ENCODE measurements at regions of chr2 and their contacts with region 1.

Region 1: DNA sequence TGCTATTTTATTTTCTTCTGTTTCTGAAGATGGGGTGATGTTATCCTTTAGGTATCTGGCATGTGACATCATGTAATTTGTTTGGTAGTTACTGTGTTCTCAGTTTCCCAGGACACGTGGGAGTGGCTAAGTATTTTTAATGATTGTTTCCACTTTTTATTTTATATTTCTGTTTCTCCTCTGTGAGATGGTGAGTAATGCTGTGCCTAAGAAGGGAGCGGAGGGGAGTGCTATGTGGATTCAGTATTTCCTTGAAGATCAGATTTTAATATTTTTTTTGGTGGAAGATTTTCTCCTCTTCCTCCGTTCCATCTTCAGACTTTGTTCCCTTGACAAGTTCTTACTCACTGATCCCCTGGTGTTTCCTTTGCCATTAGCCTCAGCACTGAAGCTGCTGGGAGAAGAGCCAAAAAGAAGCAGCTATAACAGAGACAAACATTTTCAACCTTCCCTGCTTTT is 180.0 kb upstream of the MMADHC start:
- DNase-seq: peak; percentile 47
- ATAC-seq: peak; percentile 35
- H3K4me3 ChIP-seq: peak overlapping the region; percentile 5; the same call in 1 of the 2 replicates
- H3K27ac ChIP-seq: peak overlapping the region; percentile 63
- H3K4me1 ChIP-seq: peaks cover 50% of the 10 kb centered on the region
- H3K27me3 ChIP-seq: no peaks in the 10 kb centered on the region
- CTCF ChIP-seq: no peak

Region 2: DNA sequence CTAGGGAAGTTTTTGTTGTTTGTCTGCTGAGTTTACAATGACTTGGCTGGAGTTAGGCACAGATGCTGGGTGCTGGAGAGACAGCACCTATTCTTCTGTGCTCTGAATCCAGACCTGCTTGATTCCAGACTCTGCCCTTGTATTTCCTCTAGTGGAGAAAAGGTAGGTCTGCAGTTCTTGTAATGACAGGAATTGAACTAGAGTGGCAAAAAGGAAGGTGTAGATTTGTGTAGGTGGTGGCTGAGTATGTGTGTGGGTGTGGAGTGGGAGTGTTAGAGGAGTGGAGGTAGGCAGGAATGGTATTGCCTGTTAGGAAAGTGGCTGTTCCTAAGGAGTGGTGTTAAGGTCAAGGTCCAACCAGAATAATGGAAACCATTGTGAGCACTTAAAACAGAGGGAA is 509.0 kb before region 1 on chr2:
- CTCF ChIA-PET with region 1: no interaction called
- POLR2A ChIA-PET with region 1: no interaction called
- intact Hi-C with region 1: no loop called
- DNase-seq: no peak
- ATAC-seq: no peak
- H3K4me3 ChIP-seq: no peak overlapping the region
- H3K27ac ChIP-seq: no peak overlapping the region
- H3K4me1 ChIP-seq: no peaks in the 10 kb centered on the region
- H3K27me3 ChIP-seq: peaks cover 52% of the 10 kb centered on the region
- CTCF ChIP-seq: peak; percentile 14; the same call in 1 of the 2 replicates

Region 3: DNA sequence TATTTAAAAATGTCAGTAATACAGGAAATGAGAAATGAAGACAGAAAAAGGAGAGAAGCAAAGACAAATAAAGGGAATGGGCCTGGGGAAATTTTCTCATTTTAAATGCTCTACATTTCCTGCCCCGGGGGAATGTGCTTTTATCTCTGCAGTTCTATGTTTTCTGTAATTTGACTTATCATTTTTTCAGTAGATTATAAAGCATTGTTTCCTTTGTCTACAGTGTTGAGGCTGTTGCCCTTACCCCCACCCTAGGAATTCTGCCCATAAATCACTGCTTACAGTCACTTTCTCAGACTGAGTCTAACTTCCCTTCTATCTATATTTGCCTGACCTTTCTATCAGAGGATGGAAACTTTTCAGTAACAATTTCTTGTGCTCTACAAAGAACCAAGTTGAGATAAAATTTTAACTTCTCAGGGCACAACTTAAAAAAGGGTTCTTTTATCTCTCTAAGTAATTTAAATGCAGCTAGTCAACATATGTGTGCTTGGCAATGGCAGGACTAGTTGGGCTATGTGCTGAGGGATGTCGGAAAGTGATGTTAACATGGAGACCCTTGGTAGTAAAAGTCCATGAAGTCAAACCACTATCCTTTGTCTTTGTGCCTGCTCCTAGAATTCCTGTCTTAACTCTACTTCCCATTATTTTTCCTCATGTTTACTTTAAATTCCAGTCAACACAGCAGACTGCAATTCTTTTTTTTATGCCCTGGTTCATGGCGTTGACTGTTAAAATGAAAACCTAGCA is 33.4 kb before region 1 on chr2:
- CTCF ChIA-PET with region 1: no interaction called
- POLR2A ChIA-PET with region 1: no interaction called
- intact Hi-C with region 1: loop called (anchors 5 kb)
- DNase-seq: peak; percentile 80
- ATAC-seq: peak; percentile 55
- H3K4me3 ChIP-seq: no peak overlapping the region
- H3K27ac ChIP-seq: peak overlapping the region; percentile 97
- H3K4me1 ChIP-seq: peaks cover 42% of the 10 kb centered on the region
- H3K27me3 ChIP-seq: no peaks in the 10 kb centered on the region
- CTCF ChIP-seq: no peak

Region 4: DNA sequence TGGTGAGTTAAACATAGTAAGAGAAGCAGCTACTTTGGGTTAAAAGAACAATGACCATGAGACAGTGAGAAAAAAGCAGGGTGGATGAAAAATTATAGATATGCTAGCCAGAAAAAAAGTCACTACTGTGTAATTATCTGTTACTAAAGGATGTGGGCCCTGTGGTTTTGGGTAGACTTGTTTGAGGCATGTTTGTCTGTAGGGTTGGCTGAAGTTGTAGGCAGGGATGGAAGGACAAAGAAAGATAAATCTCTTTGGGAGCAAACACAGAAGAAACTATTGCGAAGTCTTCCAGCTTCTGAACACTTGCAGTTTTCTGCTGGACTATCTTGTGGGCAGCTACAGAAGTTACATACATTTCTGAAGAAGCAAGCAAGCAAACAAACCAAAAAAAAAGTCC is 691.7 kb after region 1 on chr2:
- CTCF ChIA-PET with region 1: no interaction called
- POLR2A ChIA-PET with region 1: interaction called, 11 read pairs
- intact Hi-C with region 1: no loop called
- DNase-seq: no peak
- ATAC-seq: no peak
- H3K4me3 ChIP-seq: no peak overlapping the region
- H3K27ac ChIP-seq: no peak overlapping the region
- H3K4me1 ChIP-seq: peaks cover 5% of the 10 kb centered on the region
- H3K27me3 ChIP-seq: no peaks in the 10 kb centered on the region
- CTCF ChIP-seq: no peak

Region 5: GRCh38 chr2:150466741-150467620 is 699.4 kb after region 1 on chr2:
- CTCF ChIA-PET with region 1: no interaction called
- POLR2A ChIA-PET with region 1: no interaction called
- intact Hi-C with region 1: loop called (anchors 5 kb)
- DNase-seq: peak; percentile 63
- ATAC-seq: peak; percentile 7
- H3K4me3 ChIP-seq: no peak overlapping the region
- H3K27ac ChIP-seq: peak overlapping the region; percentile 16
- H3K4me1 ChIP-seq: peaks cover 56% of the 10 kb centered on the region
- H3K27me3 ChIP-seq: no peaks in the 10 kb centered on the region
- CTCF ChIP-seq: no peak

Measured in PC-3 (cell line).